Calu3 (cell line): ENCODE measurements at regions of chr13 and their contacts with region 1.

Region 1: GRCh38 chr13:108777421-108778420 is 148.3 kb downstream of the MYO16 start:
- DNase-seq: no peak
- H3K4me3 Mint-ChIP-seq: no peak overlapping the region
- H3K27ac Mint-ChIP-seq: peak overlapping the region; percentile 69
- H3K4me1 Mint-ChIP-seq: peaks cover 20% of the 10 kb centered on the region
- H3K27me3 Mint-ChIP-seq: no peaks in the 10 kb centered on the region
- CTCF ChIP-seq: no peak

Region 2: GRCh38 chr13:108816381-108816780 is 38.7 kb after region 1 on chr13:
- CTCF ChIA-PET with region 1: no interaction called
- intact Hi-C with region 1: loop called (anchors 5 kb)
- DNase-seq: peak; percentile 23
- H3K4me3 Mint-ChIP-seq: no peak overlapping the region
- H3K27ac Mint-ChIP-seq: no peak overlapping the region
- H3K4me1 Mint-ChIP-seq: peaks cover 36% of the 10 kb centered on the region
- H3K27me3 Mint-ChIP-seq: no peaks in the 10 kb centered on the region
- CTCF ChIP-seq: no peak

Region 3: DNA sequence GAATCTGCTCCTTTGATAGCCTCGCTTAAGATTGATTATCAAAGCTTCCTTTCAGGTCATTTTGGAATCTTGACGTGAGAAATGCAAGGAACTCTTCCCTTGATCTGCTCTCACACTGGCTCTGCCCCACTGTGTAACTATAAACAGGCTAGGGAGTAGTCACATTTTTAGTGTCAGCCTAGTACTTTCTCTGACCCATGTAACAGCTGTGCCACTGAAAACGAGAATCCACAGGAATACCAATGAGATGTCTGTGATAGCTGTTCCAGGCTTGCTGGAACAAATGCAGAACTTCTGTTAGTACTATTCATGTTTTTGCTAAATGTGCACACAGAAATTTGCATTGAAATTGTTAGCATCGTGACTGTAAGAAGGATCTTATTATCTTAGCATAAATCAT is 73.0 kb after region 1 on chr13:
- CTCF ChIA-PET with region 1: no interaction called
- intact Hi-C with region 1: no loop called
- DNase-seq: no peak
- H3K4me3 Mint-ChIP-seq: no peak overlapping the region
- H3K27ac Mint-ChIP-seq: no peak overlapping the region
- H3K4me1 Mint-ChIP-seq: no peaks in the 10 kb centered on the region
- H3K27me3 Mint-ChIP-seq: no peaks in the 10 kb centered on the region
- CTCF ChIP-seq: no peak

Region 4: GRCh38 chr13:109058082-109058481 is 280.4 kb after region 1 on chr13:
- CTCF ChIA-PET with region 1: no interaction called
- intact Hi-C with region 1: no loop called
- DNase-seq: no peak
- H3K4me3 Mint-ChIP-seq: no peak overlapping the region
- H3K27ac Mint-ChIP-seq: no peak overlapping the region
- H3K4me1 Mint-ChIP-seq: no peaks in the 10 kb centered on the region
- H3K27me3 Mint-ChIP-seq: no peaks in the 10 kb centered on the region
- CTCF ChIP-seq: no peak